Posterior vena cava (tissue), 2 donors: ENCODE measurements at regions of chr2 and their contacts with region 1.

Region 1: GRCh38 chr2:153575171-153575853 is 96.8 kb upstream of the RPRM start:
- DNase-seq: no peak

Region 2: DNA sequence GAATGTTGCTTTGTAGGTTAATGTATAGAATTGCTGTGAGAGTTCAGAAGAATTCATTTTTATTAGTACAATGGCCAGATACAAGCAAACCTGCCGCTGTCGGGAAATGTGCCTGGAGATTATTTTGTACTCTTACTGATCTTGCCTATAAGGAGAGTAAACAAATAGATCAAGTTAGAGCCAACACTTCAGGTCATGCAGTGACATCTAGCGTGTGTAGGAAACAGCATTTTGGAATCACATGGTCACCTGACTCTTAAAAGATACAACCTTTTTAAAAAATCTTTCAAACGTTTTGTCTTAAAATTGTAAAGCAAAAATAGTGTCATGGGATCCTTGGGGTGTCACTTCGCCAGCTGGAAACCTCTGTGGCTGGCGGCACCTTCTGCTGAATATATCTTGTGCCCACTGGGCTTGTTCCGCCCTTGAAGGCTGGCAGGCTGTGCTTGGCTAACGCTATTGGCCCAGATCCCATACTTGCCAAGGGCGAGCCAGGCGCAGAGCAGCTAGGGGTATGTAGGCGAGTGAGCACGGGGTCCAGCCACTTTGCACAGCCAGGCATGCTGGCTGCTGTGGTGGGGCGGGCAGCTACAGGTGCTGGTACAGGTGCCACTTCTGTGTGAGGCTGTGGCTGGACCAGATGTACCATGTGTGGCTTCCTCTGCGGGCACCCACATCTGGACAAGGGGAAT is 77.2 kb before region 1 on chr2:
- intact Hi-C with region 1: no loop called
- DNase-seq: no peak

Region 3: DNA sequence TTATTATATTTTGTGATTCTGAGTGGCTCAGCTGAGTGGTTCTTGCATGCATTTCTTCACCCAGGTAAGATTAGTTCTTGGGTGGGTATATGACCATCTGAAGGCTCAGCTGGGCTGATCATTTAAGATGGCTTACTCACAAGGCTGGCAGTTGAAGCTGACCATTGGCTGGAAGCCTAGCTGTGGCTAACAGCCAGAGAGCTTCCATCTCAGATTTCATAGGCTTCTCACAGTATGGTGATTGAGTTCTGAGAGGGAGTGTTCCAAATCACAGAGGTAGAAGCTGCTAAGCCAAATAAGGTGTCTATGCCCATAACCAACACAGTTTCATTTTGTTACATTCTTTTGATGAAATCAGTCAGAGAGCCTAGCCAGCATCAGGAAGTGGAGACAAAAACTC is 20.6 kb after region 1 on chr2:
- intact Hi-C with region 1: loop called in 1 of 2 experiments (anchors 2 kb)
- DNase-seq: no peak